K562 (cell line): ENCODE measurements at regions of chr5 and their contacts with region 1.

Region 1: GRCh38 chr5:141564216-141564692 is 54.5 kb downstream of the DIAPH1 start:
- DNase-seq: peak; percentile 73 to 91 (median 76)
- ATAC-seq: peak; percentile 92
- H3K4me3 ChIP-seq: no peak overlapping the region
- H3K27ac ChIP-seq: peak overlapping the region; percentile 80
- H3K4me1 ChIP-seq: 0 out of 5 replicates have a peak, but pooled peaks cover 0 to 4% of the 10 kb centered on the region in 2 experiments
- H3K27me3 ChIP-seq: no peaks in the 10 kb centered on the region
- CTCF ChIP-seq: peak; percentile 92 to 98 (median 95)
- EP300 ChIP-seq: peak; percentile 87
- POLR2A ChIP-seq: no peak
- RAD21 ChIP-seq: peak; percentile 75 to 83

Region 2: GRCh38 chr5:141149812-141150211 is 414.4 kb before region 1 on chr5 and contains the start of gene PCDHB6:
- CTCF ChIA-PET with region 1: no interaction called
- POLR2A ChIA-PET with region 1: no interaction called
- in situ Hi-C with region 1: no loop called
- intact Hi-C with region 1: no loop called
- DNase-seq: peak in 2 of 4 experiments; percentile 13 to 30
- ATAC-seq: peak; percentile 73
- H3K4me3 ChIP-seq: no peak within 1 kb of the TSS
- H3K27ac ChIP-seq: no peak within 1 kb of the TSS
- H3K4me1 ChIP-seq: no peaks in the 10 kb centered on the region
- H3K27me3 ChIP-seq: peaks cover 0 to 15% of the 10 kb centered on the region in 2 experiments; a peak in 2 of 5 replicates
- CTCF ChIP-seq: peak; percentile 21 to 42 (median 40); a peak in 4 of 6 replicates
- EP300 ChIP-seq: no peak
- POLR2A ChIP-seq: no peak
- RAD21 ChIP-seq: no peak
- polyA plus RNA-seq, gene PCDHB6: not detected

Region 3: GRCh38 chr5:141234109-141234667 is 330.1 kb before region 1 on chr5:
- CTCF ChIA-PET with region 1: no interaction called
- POLR2A ChIA-PET with region 1: no interaction called
- in situ Hi-C with region 1: loop called (anchors 10 kb)
- intact Hi-C with region 1: no loop called
- DNase-seq: peak in 1 of 4 experiments; percentile 9
- ATAC-seq: no peak
- H3K4me3 ChIP-seq: no peak overlapping the region
- H3K27ac ChIP-seq: no peak overlapping the region
- H3K4me1 ChIP-seq: peaks cover 0 to 5% of the 10 kb centered on the region in 2 experiments; a peak in 1 of 5 replicates
- H3K27me3 ChIP-seq: peaks cover 2 to 13% of the 10 kb centered on the region in 2 experiments; a peak in 2 of 5 replicates
- CTCF ChIP-seq: peak; percentile 48 to 68 (median 54); a peak in 4 of 6 replicates
- EP300 ChIP-seq: no peak
- POLR2A ChIP-seq: no peak
- RAD21 ChIP-seq: peak; percentile 19 to 37; a peak in 2 of 4 replicates

Region 4: DNA sequence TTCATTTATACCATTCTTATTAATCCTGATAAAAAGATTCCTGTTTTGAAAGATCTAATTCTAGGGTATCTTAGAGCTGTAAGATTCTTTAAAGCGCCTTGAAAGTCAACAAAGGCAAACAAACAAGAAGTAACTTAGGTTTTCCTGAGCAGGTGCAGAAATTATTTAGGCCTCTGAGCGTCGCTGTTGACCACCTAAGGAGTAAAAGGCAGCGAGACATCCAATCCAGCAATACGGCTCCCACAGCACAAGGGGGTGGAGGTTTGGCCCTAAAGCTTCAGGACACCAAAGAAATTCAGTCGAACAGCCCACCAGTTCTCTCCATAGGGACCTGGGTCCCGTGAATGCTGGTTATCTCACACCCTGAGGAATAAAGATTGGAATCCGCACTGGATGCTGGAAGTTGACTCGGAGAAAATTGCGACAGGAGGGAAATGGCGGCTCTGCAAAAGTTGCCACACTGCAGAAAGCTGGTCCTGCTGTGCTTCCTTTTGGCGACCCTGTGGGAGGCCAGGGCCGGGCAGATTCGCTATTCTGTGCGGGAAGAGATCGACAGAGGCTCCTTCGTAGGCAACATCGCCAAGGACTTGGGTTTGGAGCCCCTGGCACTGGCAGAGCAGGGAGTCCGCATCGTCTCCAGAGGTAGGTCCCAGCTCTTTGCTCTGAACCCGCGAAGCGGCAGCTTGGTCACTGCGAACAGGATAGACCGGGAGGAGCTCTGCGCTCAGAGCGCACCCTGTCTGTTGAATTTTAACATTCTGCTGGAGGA is 225.5 kb before region 1 on chr5 and contains the start of gene PCDHGA2:
- CTCF ChIA-PET with region 1: interaction called, 6 read pairs
- POLR2A ChIA-PET with region 1: interaction called, 4 read pairs
- in situ Hi-C with region 1: no loop called
- intact Hi-C with region 1: loop called (anchors 5 kb)
- DNase-seq: peak; percentile 57 to 67 (median 62)
- ATAC-seq: peak; percentile 80
- H3K4me3 ChIP-seq: peak within 1 kb of the TSS; percentile 34
- H3K27ac ChIP-seq: no peak within 1 kb of the TSS
- H3K4me1 ChIP-seq: peaks cover 0 to 6% of the 10 kb centered on the region in 2 experiments; a peak in 3 of 5 replicates
- H3K27me3 ChIP-seq: peaks cover 10 to 26% of the 10 kb centered on the region in 2 experiments; a peak in 4 of 5 replicates
- CTCF ChIP-seq: peak; percentile 79 to 84 (median 82)
- EP300 ChIP-seq: no peak
- POLR2A ChIP-seq: no peak
- RAD21 ChIP-seq: peak; percentile 35 to 50; a peak in 3 of 4 replicates
- polyA plus RNA-seq, gene PCDHGA2: not detected

Region 5: GRCh38 chr5:141402553-141403260 is 161.5 kb before region 1 on chr5 and contains the start of gene PCDHGA9:
- CTCF ChIA-PET with region 1: interaction called, 10 read pairs
- POLR2A ChIA-PET with region 1: no interaction called
- in situ Hi-C with region 1: no loop called
- intact Hi-C with region 1: no loop called
- DNase-seq: peak; percentile 34 to 60 (median 38)
- ATAC-seq: peak; percentile 78
- H3K4me3 ChIP-seq: no peak within 1 kb of the TSS
- H3K27ac ChIP-seq: no peak within 1 kb of the TSS
- H3K4me1 ChIP-seq: peaks cover 0 to 9% of the 10 kb centered on the region in 2 experiments; a peak in 3 of 5 replicates
- H3K27me3 ChIP-seq: peaks cover 3 to 30% of the 10 kb centered on the region in 2 experiments; a peak in 3 of 5 replicates
- CTCF ChIP-seq: peak; percentile 56 to 61 (median 59)
- EP300 ChIP-seq: no peak
- POLR2A ChIP-seq: no peak
- RAD21 ChIP-seq: peak in 1 of 2 experiments; percentile 41; a peak in 2 of 4 replicates
- polyA plus RNA-seq, gene PCDHGA9: not detected